ENCODE measurements at regions of chr19 and their contacts with region 1.

Region 1: DNA sequence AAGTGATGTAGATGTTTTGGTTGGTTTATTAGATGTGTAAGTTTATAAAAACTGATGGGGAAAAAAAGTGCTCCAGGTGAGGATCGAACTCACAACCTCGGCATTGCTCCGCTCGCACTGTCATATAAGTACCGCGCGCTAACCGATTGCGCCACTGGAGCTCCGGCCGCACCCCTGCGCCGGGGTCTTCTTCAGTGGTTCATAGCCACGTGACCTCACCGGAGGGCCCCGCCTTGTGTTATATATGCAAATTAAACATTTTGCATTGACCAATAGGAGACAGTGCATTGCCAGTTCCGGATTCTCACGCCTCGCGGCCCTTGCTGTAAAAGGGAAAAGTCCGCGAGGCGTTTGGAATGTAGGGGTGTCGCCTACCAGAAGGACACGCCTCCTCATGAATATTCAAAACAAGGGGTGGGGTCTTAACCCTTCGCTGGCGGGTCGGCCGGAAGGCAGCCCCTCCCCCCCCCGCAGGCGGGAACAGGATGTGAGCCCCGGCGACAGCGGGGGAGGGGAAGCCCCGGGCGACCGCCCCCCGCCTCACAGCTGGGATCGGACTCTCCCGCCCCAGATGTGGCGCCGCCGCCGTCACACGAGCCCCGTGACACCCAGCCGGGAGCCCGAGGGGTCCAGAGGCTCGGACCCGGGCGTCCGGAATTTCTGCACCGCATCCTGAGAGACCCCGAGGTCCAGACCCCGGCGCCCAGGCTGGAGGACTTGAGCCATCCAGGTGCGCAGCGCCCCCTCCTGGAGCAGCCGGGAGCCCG is at the start of gene PLEKHG2:
- DNase-seq: peak; percentile 98
- ATAC-seq: peak; percentile 74
- H3K4me3 Mint-ChIP-seq: peak within 1 kb of the TSS; percentile 79
- H3K27ac Mint-ChIP-seq: peak within 1 kb of the TSS; percentile 89
- H3K4me1 Mint-ChIP-seq: peaks cover 29% of the 10 kb centered on the region
- H3K27me3 Mint-ChIP-seq: peaks cover 2% of the 10 kb centered on the region
- CTCF ChIP-seq: peak; percentile 85
- total RNA-seq, gene PLEKHG2: 35.9 to 42.8 TPM

Region 2: GRCh38 chr19:39125554-39126311 is 286.6 kb before region 1 on chr19 and contains the start of gene PAK4:
- CTCF ChIA-PET with region 1: interaction called, 3 read pairs
- POLR2A ChIA-PET with region 1: no interaction called
- intact Hi-C with region 1: loop called (anchors 10 kb)
- DNase-seq: peak; percentile 99
- ATAC-seq: peak; percentile 95
- H3K4me3 Mint-ChIP-seq: peak within 1 kb of the TSS; percentile 92
- H3K27ac Mint-ChIP-seq: peak within 1 kb of the TSS; percentile 94
- H3K4me1 Mint-ChIP-seq: peaks cover 32% of the 10 kb centered on the region
- H3K27me3 Mint-ChIP-seq: no peaks in the 10 kb centered on the region
- CTCF ChIP-seq: no peak
- total RNA-seq, gene PAK4: 9.8 to 11.5 TPM

Region 3: DNA sequence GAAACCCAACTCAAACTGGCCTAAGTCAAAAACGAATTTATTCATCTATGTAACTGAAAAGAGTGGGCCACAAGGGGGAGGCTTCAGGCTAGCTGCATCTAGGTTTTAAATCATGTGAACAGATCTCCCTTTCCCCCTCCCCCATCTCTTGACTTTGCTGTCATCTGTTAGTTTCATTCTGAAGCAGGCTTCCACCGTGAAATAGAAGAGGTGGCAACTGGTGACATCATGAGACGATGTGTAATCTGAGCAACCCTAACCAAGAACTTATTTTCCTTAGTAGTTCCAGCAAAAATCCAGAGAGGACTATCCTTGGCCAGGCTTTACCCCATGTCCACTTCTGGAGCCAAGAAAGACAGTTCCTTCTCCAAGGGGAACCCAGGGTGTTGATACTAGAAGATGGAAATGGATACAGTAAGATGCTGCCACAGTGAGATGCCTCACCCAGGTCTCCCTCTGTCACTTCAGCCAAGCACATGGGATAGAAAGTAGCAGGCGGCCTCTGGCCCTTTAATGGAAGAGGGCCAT is 60.7 kb before region 1 on chr19:
- CTCF ChIA-PET with region 1: interaction called, 13 read pairs
- POLR2A ChIA-PET with region 1: interaction called, 3 read pairs
- intact Hi-C with region 1: no loop called
- DNase-seq: peak; percentile 81
- ATAC-seq: peak; percentile 96
- H3K4me3 Mint-ChIP-seq: no peak overlapping the region
- H3K27ac Mint-ChIP-seq: peak overlapping the region; percentile 87
- H3K4me1 Mint-ChIP-seq: peaks cover 43% of the 10 kb centered on the region
- H3K27me3 Mint-ChIP-seq: no peaks in the 10 kb centered on the region
- CTCF ChIP-seq: peak; percentile 2

Region 4: DNA sequence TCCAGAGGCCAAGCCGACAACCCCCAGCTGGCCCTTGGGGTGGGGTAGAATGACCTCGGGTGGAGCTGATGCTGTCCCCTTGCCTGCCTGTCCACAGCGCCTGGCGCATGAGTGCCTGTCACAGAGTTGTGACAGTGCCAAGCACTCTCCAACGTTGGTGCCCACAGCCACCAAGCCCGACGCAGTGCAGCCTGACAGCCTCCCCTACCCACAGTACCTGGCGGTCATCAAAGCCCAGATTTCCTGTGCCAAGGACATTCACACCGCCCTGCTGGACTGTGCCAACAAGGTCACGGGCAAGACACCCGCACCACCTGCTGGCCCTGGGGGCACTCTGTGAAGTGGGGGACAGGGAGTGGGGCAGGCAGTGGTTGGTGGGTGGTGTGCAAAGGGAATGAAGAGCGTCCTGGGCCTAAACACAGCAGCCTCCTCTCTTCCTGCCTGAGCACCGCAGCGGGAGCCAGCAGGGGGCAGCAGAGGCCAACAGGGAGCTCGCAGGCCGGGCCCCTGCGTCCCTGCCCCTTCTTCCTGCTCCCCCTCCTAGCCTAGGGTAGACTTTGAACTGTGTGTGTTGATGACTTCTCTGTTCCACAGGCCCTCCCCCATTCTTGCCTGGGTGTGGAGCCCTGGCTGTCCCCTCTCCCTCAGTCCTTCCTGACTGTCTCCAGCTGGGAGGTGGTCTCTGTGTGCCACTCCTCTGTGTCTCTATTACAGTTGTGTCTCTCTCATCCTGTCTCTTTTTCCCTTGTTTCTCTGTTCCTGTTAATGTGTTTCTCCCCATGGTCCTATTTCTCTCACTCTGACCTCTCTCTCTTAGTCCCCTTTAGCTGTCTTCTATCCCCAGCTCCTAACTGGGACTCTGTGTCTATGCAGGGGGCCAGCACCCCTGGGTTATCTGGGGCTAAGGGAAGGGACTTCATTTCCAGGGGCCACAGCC is 14.7 kb before region 1 on chr19:
- CTCF ChIA-PET with region 1: interaction called, 153 read pairs
- POLR2A ChIA-PET with region 1: interaction called, 80 read pairs
- intact Hi-C with region 1: loop called (anchors 1 kb)
- DNase-seq: peak; percentile 97
- ATAC-seq: peak; percentile 64
- H3K4me3 Mint-ChIP-seq: peak overlapping the region; percentile 44
- H3K27ac Mint-ChIP-seq: peak overlapping the region; percentile 90
- H3K4me1 Mint-ChIP-seq: peaks cover 65% of the 10 kb centered on the region
- H3K27me3 Mint-ChIP-seq: no peaks in the 10 kb centered on the region
- CTCF ChIP-seq: peak; percentile 92

Region 5: DNA sequence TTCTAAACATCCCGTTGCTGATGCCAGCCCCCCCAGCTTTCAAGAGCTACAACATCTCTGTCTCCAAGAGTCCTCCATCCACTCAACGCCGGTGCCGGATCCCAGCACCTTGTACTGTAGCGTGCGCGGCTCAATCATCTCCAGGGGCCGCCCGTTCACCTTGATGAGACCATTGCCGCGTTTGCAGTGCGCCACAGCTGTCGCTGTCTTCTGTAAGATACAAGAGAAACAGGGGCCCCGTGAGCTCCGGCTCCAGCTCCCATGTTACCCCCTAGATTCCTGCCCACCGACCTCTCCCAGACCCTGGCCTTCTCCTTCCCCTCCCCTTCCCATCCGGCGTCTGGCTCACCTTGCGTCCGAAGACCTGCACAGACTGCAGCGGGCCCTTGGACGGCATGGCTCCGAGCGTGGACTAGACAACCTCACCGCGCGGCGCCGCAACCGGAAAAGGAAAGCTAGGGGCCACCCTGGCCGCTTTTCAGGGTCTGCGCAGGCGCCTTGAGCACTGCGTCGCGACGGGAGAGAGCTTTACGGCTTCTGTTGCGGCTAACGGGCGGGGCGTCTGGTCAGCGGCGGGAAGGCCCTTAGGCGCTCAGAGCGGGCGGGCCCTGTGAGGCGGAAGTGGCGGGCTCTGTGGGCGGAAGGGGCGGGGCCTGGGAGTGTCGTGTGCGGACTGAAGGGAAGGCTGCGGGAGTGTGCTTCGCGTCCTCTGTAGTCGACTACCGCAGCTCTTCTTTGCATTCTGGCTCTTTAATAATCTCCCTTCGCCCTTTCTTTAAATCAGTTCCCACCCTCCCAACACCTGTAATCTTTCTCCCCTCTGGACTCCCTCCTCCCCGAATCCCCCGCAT is 23.4 kb after region 1 on chr19 and contains the start of gene RPS16:
- CTCF ChIA-PET with region 1: interaction called, 7 read pairs
- POLR2A ChIA-PET with region 1: interaction called, 66 read pairs
- intact Hi-C with region 1: no loop called
- DNase-seq: peak; percentile 99
- ATAC-seq: peak; percentile 92
- H3K4me3 Mint-ChIP-seq: peak within 1 kb of the TSS; percentile 100
- H3K27ac Mint-ChIP-seq: peak within 1 kb of the TSS; percentile 99
- H3K4me1 Mint-ChIP-seq: peaks cover 49% of the 10 kb centered on the region
- H3K27me3 Mint-ChIP-seq: no peaks in the 10 kb centered on the region
- CTCF ChIP-seq: no peak
- total RNA-seq, gene RPS16: 3,249 to 3,324 TPM

Region 6: DNA sequence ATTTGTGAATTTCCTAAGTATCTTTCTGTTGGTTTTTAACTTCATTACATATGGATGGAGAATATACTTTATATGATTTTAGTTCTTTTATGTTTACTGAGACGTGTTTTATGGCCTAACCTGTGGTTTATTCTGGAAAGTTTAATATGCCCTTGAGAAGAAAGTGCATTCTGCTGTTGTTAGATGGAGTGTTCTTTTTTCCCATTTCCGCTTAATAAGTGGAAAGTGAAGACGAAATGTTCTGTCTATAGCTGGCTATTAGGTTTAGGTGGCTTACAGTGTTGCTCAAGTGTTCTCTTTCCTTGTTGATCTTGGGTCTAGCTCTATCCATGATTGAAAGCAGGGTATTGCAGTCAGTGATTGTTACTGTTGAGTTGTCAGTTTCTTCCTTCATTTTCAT is 51.1 kb after region 1 on chr19:
- CTCF ChIA-PET with region 1: no interaction called
- POLR2A ChIA-PET with region 1: no interaction called
- intact Hi-C with region 1: no loop called
- DNase-seq: no peak
- ATAC-seq: no peak
- H3K4me3 Mint-ChIP-seq: no peak overlapping the region
- H3K27ac Mint-ChIP-seq: peak overlapping the region; percentile 31
- H3K4me1 Mint-ChIP-seq: peaks cover 3% of the 10 kb centered on the region
- H3K27me3 Mint-ChIP-seq: no peaks in the 10 kb centered on the region
- CTCF ChIP-seq: no peak

Region 7: GRCh38 chr19:39514840-39515550 is 102.7 kb after region 1 on chr19 and contains the start of gene SELENOV:
- CTCF ChIA-PET with region 1: no interaction called
- POLR2A ChIA-PET with region 1: no interaction called
- intact Hi-C with region 1: no loop called
- DNase-seq: peak; percentile 49
- ATAC-seq: peak; percentile 76
- H3K4me3 Mint-ChIP-seq: peak within 1 kb of the TSS; percentile 60
- H3K27ac Mint-ChIP-seq: no peak within 1 kb of the TSS
- H3K4me1 Mint-ChIP-seq: peaks cover 8% of the 10 kb centered on the region
- H3K27me3 Mint-ChIP-seq: peaks cover 40% of the 10 kb centered on the region
- CTCF ChIP-seq: no peak
- total RNA-seq, gene SELENOV: not detected

Region 8: GRCh38 chr19:39568604-39569003 is 156.3 kb after region 1 on chr19:
- CTCF ChIA-PET with region 1: no interaction called
- POLR2A ChIA-PET with region 1: no interaction called
- intact Hi-C with region 1: no loop called
- DNase-seq: no peak
- ATAC-seq: no peak
- H3K4me3 Mint-ChIP-seq: no peak overlapping the region
- H3K27ac Mint-ChIP-seq: no peak overlapping the region
- H3K4me1 Mint-ChIP-seq: no peaks in the 10 kb centered on the region
- H3K27me3 Mint-ChIP-seq: peaks cover 21% of the 10 kb centered on the region
- CTCF ChIP-seq: no peak

Measured in activated CD8-positive, alpha-beta T cell treated with anti-CD3 and anti-CD28 coated beads for 36 hours (primary cell).